Lower leg skin (tissue), 4 donors: ENCODE measurements at regions of chr12 and their contacts with region 1.

Region 1: DNA sequence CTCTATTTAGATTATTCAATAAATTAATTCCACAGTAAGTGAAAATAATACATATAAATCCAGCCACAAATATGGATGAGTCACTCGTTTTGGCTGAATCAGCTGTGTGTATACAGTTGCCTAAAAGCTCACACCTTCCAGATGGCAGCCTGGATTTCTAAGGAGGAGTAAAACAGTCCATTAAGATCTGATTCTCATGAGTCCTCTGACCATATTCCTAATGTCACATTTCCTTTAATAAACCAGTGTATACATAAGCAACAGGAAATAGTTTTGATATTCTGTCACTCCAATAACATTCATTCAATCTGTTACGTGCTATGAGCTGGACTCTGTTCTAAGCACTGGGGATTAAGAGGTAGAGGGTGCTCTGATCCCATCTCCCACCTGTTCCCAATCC is 21.8 kb downstream of the MDM1 start:
- DNase-seq: no peak
- H3K4me3 ChIP-seq: no peak overlapping the region
- CTCF ChIP-seq: no peak
- POLR2A ChIP-seq: no peak

Region 2: GRCh38 chr12:68175557-68176061 is 134.8 kb before region 1 on chr12:
- intact Hi-C with region 1: no loop called
- DNase-seq: no peak
- H3K4me3 ChIP-seq: no peak overlapping the region
- CTCF ChIP-seq: no peak
- POLR2A ChIP-seq: no peak

Region 3: DNA sequence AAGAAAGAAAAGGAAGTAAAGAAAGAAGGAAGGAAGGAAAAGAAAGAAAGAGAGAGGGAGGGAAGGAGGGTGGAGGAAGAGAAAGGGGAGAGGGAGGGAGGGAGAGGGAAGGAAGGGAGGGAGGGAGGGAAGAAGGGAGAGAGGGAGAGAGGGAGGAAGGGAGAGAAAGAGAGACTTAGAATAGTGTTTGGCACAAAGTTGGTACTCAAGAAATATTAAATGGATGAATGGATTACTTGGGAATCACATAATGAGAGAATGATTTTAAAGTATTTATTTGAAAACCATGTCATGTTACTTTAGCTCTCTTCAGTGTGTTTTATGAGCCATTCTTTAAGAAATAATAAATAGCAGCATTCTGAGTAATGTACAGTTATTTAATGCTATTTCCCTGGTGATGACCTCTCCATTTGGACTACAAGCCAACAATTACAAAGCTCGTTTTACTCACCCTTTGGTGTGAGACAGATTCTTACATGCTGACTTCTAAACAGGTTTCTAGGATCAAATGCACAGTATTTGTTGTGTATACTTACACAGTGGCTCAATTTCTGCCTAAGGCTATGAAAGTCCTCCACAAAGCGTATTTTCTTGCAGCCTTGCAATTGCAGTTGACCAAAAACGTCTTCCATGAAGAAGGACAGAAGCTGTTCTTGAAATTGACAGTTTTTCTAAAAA is 85.6 kb before region 1 on chr12:
- intact Hi-C with region 1: loop called (anchors 5 kb)
- DNase-seq: no peak
- H3K4me3 ChIP-seq: no peak overlapping the region
- CTCF ChIP-seq: no peak
- POLR2A ChIP-seq: no peak